GM10248 (cell line): ENCODE measurements at regions of chr10 and their contacts with region 1.

Region 1: DNA sequence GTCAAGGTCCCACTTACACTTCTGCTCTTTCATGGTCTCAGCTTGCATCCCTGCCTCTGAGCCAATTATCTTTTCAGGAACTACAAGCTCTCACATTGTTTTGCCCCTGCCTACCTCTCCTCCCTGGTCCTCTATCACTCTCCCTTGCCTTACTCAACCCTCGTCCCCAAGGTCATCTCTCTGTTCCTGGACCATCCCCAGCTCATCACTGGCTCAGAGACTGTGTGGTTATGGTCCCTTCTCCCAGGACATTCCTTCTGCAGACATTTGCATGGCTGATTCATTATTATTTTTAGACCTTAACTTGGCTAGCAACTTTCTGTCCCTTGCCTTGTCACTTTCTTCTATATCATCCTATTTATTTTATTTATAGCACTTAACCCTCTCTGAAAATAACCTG is 17.8 kb upstream of the GPAM start:
- DNase-seq: no peak
- CTCF ChIP-seq: no peak

Region 2: GRCh38 chr10:112183329-112184051 is 17.8 kb before region 1 on chr10 and contains the start of gene GPAM:
- CTCF ChIA-PET with region 1: interaction called, 22 read pairs
- POLR2A ChIA-PET with region 1: no interaction called
- DNase-seq: peak; percentile 95
- CTCF ChIP-seq: no peak